ENCODE measurements at regions of chrX and their contacts with region 1.

Region 1: GRCh38 chrX:152632445-152633097 is 5.1 kb upstream of the GABRQ start:
- DNase-seq: peak; percentile 69
- H3K4me3 Mint-ChIP-seq: no peak overlapping the region
- H3K27ac Mint-ChIP-seq: no peak overlapping the region
- H3K4me1 Mint-ChIP-seq: no peaks in the 10 kb centered on the region
- H3K27me3 Mint-ChIP-seq: no peaks in the 10 kb centered on the region
- CTCF ChIP-seq: peak; percentile 56

Region 2: DNA sequence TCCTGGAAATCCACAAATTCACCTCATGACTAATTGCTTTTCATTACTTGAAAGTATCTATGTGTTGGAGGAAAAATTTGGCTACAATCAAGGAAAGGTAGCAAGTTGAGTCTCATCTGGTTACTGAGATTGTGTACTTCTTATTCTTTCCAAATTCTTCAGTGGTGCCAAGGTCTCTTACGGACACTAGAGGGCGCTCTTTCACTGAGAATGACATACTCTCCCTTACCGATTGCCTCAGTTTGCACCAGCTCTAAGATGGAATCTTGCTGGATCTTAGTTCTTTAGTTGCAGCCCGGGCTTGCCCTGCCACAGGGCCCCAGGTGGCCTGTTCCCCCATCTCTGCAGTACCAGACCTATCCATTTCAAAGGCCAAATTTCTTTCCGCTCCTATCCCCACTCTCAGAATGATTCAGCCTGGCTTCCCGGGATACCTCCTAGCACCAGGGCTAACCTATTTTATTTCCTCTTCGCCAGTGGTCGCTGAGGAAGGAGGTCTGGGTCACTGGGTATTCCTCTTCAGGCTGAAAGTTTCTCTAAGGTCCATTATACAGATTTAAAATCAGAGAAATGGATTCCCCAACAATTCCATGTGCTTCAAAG is 1480.8 kb before region 1 on chrX:
- CTCF ChIA-PET with region 1: interaction called, 6 read pairs
- POLR2A ChIA-PET with region 1: no interaction called
- intact Hi-C with region 1: loop called (anchors 5 kb)
- DNase-seq: peak; percentile 71
- H3K4me3 Mint-ChIP-seq: no peak overlapping the region
- H3K27ac Mint-ChIP-seq: no peak overlapping the region
- H3K4me1 Mint-ChIP-seq: peaks cover 5% of the 10 kb centered on the region
- H3K27me3 Mint-ChIP-seq: peaks cover 36% of the 10 kb centered on the region
- CTCF ChIP-seq: peak; percentile 61

Region 3: DNA sequence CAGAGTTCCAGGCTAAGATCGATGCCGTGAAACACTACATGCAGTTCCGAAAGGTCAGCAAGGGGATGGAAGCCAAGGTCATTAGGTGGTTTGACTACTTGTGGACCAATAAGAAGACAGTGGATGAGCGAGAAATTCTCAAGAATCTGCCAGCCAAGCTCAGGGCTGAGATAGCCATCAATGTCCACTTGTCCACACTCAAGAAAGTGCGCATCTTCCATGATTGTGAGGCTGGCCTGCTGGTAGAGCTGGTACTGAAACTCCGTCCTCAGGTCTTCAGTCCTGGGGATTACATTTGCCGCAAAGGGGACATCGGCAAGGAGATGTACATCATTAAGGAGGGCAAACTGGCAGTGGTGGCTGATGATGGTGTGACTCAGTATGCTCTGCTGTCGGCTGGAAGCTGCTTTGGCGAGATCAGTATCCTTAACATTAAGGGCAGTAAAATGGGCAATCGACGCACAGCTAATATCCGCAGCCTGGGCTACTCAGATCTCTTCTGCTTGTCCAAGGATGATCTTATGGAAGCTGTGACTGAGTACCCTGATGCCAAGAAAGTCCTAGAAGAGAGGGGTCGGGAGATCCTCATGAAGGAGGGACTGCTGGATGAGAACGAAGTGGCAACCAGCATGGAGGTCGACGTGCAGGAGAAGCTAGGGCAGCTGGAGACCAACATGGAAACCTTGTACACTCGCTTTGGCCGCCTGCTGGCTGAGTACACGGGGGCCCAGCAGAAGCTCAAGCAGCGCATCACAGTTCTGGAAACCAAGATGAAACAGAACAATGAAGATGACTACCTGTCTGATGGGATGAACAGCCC is 888.7 kb before region 1 on chrX:
- CTCF ChIA-PET with region 1: interaction called, 126 read pairs
- POLR2A ChIA-PET with region 1: no interaction called
- intact Hi-C with region 1: no loop called
- DNase-seq: no peak
- H3K4me3 Mint-ChIP-seq: no peak overlapping the region
- H3K27ac Mint-ChIP-seq: no peak overlapping the region
- H3K4me1 Mint-ChIP-seq: no peaks in the 10 kb centered on the region
- H3K27me3 Mint-ChIP-seq: no peaks in the 10 kb centered on the region
- CTCF ChIP-seq: no peak

Region 4: GRCh38 chrX:151825927-151826481 is 806.6 kb before region 1 on chrX:
- CTCF ChIA-PET with region 1: interaction called, 22 read pairs
- POLR2A ChIA-PET with region 1: interaction called, 9 read pairs
- intact Hi-C with region 1: loop called (anchors 1 kb)
- DNase-seq: peak; percentile 92
- H3K4me3 Mint-ChIP-seq: no peak overlapping the region
- H3K27ac Mint-ChIP-seq: peak overlapping the region; percentile 33
- H3K4me1 Mint-ChIP-seq: peaks cover 21% of the 10 kb centered on the region
- H3K27me3 Mint-ChIP-seq: no peaks in the 10 kb centered on the region
- CTCF ChIP-seq: peak; percentile 32

Region 5: GRCh38 chrX:152343306-152343705 is 289.3 kb before region 1 on chrX:
- CTCF ChIA-PET with region 1: interaction called, 5 read pairs
- POLR2A ChIA-PET with region 1: no interaction called
- intact Hi-C with region 1: loop called (anchors 5 kb)
- DNase-seq: peak; percentile 16
- H3K4me3 Mint-ChIP-seq: no peak overlapping the region
- H3K27ac Mint-ChIP-seq: no peak overlapping the region
- H3K4me1 Mint-ChIP-seq: peaks cover 7% of the 10 kb centered on the region
- H3K27me3 Mint-ChIP-seq: no peaks in the 10 kb centered on the region
- CTCF ChIP-seq: peak; percentile 19

Region 6: DNA sequence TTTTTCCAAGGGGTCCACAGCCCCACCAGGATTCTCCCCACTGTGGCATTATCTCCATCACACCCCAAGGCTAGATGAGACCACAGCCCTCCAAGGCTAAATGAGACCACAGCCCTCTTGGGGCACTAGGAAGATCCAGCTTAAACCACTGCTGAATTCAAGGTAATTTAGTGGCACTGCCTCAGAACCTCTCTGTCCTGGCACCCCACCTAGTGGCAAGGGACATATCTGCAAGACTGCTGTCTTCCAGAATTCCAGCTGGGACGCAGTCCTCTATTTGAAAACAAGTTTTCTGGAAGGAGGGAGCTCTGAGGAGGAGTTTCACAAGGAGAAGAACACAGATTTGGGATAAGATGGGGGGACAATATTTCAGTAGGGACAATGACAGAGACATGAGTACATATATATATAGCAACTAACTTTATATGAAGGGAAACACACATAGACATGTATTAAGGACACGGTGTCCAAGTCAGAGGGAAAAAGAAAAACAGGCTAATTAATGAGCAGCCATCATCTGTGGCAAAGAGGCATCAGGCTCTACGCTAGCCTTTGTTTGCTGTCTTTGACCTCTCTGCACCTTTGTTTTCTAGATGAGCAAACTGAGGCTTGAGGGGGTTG is 188.7 kb after region 1 on chrX:
- CTCF ChIA-PET with region 1: interaction called, 12 read pairs
- POLR2A ChIA-PET with region 1: no interaction called
- intact Hi-C with region 1: no loop called
- DNase-seq: peak; percentile 54
- H3K4me3 Mint-ChIP-seq: no peak overlapping the region
- H3K27ac Mint-ChIP-seq: no peak overlapping the region
- H3K4me1 Mint-ChIP-seq: peaks cover 4% of the 10 kb centered on the region
- H3K27me3 Mint-ChIP-seq: no peaks in the 10 kb centered on the region
- CTCF ChIP-seq: peak; percentile 45